ENCODE measurements at regions of chr12 and their contacts with region 1.

Region 1: GRCh38 chr12:76878899-76879709 is at the start of gene CSRP2:
- DNase-seq: peak; percentile 80
- H3K4me3 Mint-ChIP-seq: peak within 1 kb of the TSS; percentile 87
- H3K27ac Mint-ChIP-seq: peak within 1 kb of the TSS; percentile 50
- H3K4me1 Mint-ChIP-seq: peaks cover 3% of the 10 kb centered on the region
- H3K27me3 Mint-ChIP-seq: peaks cover 36% of the 10 kb centered on the region
- total RNA-seq, gene CSRP2: 0.62 to 0.86 TPM

Region 2: GRCh38 chr12:76621582-76622024 is 257.5 kb before region 1 on chr12:
- CTCF ChIA-PET with region 1: no interaction called
- intact Hi-C with region 1: loop called (anchors 1 kb)
- DNase-seq: peak; percentile 83
- H3K4me3 Mint-ChIP-seq: no peak overlapping the region
- H3K27ac Mint-ChIP-seq: no peak overlapping the region
- H3K4me1 Mint-ChIP-seq: peaks cover 4% of the 10 kb centered on the region
- H3K27me3 Mint-ChIP-seq: no peaks in the 10 kb centered on the region

Region 3: DNA sequence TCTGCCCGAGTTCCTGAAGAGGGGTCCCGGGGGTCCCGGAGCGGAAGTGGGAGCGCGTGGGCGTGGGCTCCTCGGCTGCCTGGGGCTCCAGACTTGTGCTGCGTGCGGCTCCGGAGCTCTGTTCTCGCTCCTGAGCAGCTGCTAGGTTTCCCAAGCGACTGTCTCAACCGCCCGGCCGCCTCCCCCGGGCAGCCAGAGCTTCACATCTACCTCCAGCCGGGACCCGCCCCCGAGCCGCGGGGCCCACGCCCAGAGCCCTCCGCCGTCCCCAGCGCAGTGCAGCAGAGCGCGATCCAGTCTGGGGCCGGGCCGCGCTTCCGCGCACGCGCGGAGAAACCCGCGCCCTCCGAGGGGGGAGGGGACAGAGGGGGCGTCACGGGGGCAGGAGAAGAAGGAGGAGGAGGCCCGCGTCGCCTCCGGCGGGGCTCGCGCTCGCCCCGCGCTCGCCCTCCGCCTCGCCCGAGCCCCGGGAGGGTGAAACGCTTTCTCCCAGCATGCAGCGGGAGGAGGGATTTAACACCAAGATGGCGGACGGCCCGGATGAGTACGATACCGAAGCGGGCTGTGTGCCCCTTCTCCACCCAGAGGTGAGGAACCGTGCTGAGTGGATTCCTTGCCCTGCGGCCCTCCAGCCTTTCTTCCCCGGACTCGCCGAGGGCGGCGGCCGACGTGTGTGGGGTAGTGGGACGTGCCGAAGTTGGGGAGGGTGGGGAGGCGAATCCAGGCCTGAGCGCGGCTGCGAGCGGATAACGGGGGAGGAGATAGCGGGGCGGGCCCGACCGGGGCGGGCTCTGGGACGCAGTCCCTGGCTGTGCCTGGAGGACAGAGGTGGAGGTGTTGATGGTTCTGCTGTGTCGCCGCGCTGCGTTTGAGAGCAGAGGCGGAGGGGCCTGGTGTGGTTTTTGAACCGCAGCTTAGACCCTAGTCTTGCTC is 115.1 kb before region 1 on chr12 and contains the start of gene ZDHHC17:
- CTCF ChIA-PET with region 1: no interaction called
- intact Hi-C with region 1: loop called (anchors 1 kb)
- DNase-seq: peak; percentile 88
- H3K4me3 Mint-ChIP-seq: peak within 1 kb of the TSS; percentile 98
- H3K27ac Mint-ChIP-seq: peak within 1 kb of the TSS; percentile 91
- H3K4me1 Mint-ChIP-seq: peaks cover 38% of the 10 kb centered on the region
- H3K27me3 Mint-ChIP-seq: no peaks in the 10 kb centered on the region
- total RNA-seq, gene ZDHHC17: 19.1 to 22.2 TPM

Region 4: DNA sequence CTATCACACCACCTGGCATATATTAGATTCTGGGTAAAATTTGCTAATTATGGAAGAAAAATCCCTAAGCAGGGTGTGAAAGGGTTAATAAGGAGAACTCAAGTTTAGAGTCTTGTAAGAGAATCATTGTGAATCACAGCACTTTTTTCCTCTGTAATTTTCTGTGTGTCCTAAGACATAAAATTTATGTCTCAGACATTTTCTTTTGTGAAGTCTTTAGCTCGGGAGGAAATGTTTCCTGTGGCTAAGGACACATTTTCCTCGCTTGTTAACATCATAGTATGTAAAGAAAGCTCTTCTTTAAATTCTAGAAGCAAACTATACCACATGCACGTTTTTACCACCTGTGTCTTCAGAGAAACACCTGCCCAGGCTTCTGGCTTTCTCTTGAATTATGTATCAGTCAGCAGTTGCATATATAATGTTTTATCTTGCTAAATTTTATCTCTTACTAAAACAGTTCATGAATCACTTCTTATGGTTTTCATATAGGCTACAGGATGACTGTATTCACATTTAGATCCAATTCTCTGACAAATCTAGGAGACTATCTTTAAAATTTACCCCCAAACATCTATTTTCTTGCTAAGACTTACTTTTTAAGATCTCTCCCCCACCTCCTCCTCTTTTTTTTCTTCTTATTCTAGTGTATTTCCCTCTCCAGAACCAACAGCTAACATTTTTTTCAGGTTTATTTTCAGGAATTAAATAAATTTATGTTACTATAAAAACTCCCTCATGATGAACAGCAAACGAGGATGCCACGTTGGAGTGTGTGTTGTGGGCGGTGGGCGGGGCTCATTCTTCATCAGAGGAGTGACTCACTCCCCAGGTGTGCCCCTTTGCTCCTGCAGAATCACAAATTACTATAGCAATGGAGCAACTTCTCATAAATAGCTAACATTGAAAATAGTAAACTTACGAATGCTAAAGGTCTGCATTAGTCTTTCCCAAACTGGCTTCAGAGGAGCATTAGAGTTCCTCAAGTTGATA is 11.3 kb after region 1 on chr12:
- CTCF ChIA-PET with region 1: no interaction called
- intact Hi-C with region 1: loop called (anchors 1 kb)
- DNase-seq: peak; percentile 79
- H3K4me3 Mint-ChIP-seq: no peak overlapping the region
- H3K27ac Mint-ChIP-seq: peak overlapping the region; percentile 18
- H3K4me1 Mint-ChIP-seq: peaks cover 13% of the 10 kb centered on the region
- H3K27me3 Mint-ChIP-seq: no peaks in the 10 kb centered on the region

Region 5: GRCh38 chr12:76927170-76927784 is 48.2 kb after region 1 on chr12:
- CTCF ChIA-PET with region 1: no interaction called
- intact Hi-C with region 1: loop called (anchors 2 kb)
- DNase-seq: peak; percentile 70
- H3K4me3 Mint-ChIP-seq: no peak overlapping the region
- H3K27ac Mint-ChIP-seq: no peak overlapping the region
- H3K4me1 Mint-ChIP-seq: no peaks in the 10 kb centered on the region
- H3K27me3 Mint-ChIP-seq: peaks cover 6% of the 10 kb centered on the region

Region 6: GRCh38 chr12:77010691-77011548 is 131.8 kb after region 1 on chr12:
- CTCF ChIA-PET with region 1: no interaction called
- intact Hi-C with region 1: loop called (anchors 2 kb)
- DNase-seq: peak; percentile 84
- H3K4me3 Mint-ChIP-seq: no peak overlapping the region
- H3K27ac Mint-ChIP-seq: no peak overlapping the region
- H3K4me1 Mint-ChIP-seq: peaks cover 5% of the 10 kb centered on the region
- H3K27me3 Mint-ChIP-seq: peaks cover 16% of the 10 kb centered on the region

Measured in activated naive CD4-positive, alpha-beta T cell treated with anti-CD3 and anti-CD28 coated beads for 36 hours (primary cell).